ENCODE measurements at regions of chr1 and their contacts with region 1.

Region 1: DNA sequence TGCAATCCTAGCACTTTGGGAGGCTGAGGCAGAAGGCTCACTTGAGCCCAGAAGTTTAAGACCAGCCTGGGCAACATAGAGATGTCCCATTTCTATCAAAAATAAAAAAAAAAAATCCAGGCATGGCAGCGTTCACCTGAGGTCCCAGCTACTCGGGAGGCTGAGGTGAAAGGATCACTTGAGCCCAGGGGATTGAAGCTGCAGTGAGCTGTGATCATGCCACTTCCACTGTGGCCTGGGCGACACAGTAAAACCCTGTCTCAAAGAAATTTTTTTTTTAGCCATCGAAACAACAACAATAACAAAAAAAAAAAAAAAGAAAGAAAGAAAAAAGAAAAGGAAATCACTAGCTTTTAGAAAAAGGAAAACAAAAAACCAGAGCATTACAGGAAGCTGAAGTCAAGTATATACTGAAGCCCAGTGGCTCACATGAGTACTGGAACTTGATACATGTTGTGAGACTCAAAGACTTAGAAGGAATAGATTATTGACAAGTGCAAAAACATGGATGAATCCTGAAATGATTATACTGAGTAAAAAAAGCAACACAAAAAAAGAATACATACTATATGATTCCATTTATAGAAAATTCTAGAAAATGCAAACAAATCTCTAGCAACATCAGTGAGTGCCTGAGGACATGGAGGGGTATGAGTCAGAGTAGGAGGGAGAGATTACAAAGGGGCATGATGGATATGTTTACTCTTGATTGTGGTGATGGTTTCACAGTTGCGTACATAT is 6.1 kb upstream of the RABGAP1L start:
- DNase-seq: peak in 1 of 2 experiments; percentile 71
- H3K4me3 ChIP-seq: no peak overlapping the region
- H3K27ac ChIP-seq: no peak overlapping the region
- H3K4me1 ChIP-seq: peaks cover 34% of the 10 kb centered on the region
- H3K27me3 ChIP-seq: no peaks in the 10 kb centered on the region
- CTCF ChIP-seq: no peak

Region 2: DNA sequence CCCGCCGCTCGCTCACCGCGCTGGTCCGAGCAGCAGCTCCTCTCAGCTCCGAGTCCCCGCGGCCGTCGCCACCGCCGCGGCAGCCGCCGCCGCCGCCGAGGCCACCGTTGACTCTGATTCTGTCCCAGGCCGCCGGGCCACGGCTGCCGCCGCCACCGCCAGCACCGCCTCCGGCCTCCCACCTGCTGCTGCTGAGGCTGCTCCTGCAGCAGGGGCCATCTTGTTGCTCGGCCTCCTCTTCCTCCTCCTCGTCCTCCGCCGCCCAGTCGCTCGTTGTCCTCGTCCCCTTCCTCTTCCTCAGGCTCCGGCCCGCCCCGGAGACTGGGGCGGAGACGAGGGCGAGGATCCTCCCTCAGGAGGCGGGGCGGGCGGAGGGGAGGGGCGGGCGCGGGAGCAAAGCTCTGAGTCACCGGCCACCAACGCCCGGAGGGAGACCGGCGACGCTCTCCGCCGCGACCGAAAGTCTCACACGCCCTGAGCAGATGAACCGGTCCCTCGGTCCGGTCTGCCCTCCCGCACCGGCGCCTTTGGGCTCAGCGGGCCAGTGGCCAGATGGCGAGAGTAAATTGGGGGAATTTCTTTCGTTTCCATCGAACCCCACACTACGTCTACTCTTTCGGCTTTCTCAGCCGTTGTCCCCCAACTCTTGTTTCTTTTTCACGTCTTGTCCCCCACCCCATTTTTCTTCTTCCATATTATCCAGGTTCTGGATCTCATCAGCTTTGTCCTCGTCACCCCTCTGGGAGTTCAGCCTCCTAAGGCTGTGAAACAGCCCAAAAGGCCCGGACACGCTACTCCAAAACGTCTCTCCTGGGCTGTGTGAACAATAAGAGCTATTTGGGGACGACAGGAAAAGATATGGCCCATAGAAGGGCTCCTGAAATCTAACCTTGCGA is 130.9 kb before region 1 on chr1 and contains the start of gene RC3H1:
- CTCF ChIA-PET with region 1: interaction called, 6 read pairs
- POLR2A ChIA-PET with region 1: interaction called, 16 read pairs
- intact Hi-C with region 1: loop called (anchors 5 kb)
- DNase-seq: peak; percentile 80 to 90
- H3K4me3 ChIP-seq: peak within 1 kb of the TSS; percentile 76
- H3K27ac ChIP-seq: peak within 1 kb of the TSS; percentile 93
- H3K4me1 ChIP-seq: peaks cover 41% of the 10 kb centered on the region
- H3K27me3 ChIP-seq: no peaks in the 10 kb centered on the region
- CTCF ChIP-seq: no peak
- total RNA-seq, gene RC3H1: 25.2 and 29.5 TPM in 2 replicates